CD14-positive monocyte (primary cell): ENCODE measurements at regions of chr6 and their contacts with region 1.

Region 1: DNA sequence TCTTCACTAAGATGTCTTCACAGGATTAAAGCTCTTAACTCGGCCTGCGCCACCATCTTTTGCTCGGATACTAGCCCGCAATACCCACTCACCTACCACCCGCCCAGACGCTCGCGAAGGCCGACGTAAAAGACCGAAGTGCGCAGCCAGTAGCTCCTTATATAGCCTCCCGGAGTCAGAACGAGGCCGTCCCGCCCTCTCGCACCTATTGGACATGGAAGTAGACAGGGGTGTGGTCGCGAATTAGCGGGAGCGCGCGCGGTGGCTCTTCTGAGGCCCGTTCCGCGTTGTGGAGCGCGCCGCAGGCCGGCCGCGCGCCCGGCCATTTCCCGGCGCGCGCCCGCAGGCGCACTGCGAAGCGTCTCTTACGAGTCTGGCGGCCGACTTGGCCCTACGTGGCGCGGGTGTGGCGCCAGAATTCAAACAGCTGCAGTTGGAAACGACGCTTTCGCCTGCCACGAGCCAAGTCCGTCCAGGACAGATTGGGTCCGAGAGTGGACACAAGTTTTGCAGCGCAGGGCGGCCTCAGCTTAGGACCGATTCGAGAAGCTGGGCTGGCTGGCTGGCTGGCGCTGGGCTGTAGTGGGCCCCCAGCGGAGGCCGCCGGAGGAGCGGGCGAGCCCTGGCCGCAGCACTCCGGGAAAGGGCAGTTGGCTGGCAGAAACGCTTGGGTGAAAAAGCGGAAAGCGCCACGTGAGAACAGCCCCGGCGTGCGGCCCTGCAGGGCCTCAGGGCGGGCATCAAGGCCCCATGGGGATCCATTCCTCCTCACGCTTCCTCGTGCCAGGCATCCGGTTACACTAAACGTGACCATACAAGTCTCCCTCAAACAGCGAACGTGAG is 36.1 kb upstream of the SYNCRIP start:
- DNase-seq: peak; percentile 99 to 100 (median 99)
- H3K4me3 ChIP-seq: peak overlapping the region; percentile 92 to 97 (median 92)
- H3K4me3 Mint-ChIP-seq: peak overlapping the region; percentile 96 to 99
- H3K27ac ChIP-seq: peak overlapping the region; percentile 83 to 89
- H3K27ac Mint-ChIP-seq: peak overlapping the region; percentile 94 to 97 (median 96)
- H3K4me1 ChIP-seq: peaks cover 40 to 49% of the 10 kb centered on the region in 2 donors
- H3K4me1 Mint-ChIP-seq: peaks cover 47% of the 10 kb centered on the region
- H3K27me3 ChIP-seq: no peaks in the 10 kb centered on the region
- H3K27me3 Mint-ChIP-seq: no peaks in the 10 kb centered on the region
- CTCF ChIP-seq: no peak

Region 2: DNA sequence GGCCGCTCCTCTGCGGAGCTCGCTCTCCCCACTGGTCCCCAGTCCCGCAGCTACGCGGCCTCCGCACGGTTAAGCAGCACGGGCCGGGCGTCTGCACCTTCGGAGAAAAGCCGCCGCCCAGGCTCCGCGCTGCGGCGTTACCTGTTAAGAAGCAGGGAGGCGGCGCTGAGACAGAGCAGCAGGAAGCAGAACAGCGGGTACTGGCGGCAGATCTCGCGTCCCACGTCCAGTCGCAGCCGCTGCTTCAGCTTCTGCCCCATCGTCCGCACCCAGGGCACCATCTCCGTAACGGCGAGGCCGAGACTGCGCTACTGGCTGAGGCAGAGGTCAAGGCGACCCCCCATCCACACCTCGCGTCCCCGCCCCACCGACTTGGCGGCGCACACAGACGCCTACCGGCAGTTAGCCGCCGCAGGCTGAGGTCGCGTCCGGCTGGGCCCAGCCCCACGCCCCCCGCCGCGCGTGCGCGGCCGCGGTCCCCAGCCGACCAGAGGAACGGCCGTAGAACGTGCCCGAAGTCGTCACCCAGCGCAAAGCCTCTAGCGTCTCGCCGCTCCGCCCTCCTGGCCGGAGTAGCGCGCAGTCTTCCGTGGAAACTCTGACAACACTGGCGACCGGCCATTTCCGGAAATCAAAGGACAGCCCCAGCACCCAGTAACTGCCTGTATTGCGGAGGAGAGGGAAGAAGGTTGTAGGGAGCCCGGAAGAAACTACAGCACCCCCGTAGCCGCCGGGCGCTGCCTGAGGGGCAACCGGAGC is 85.2 kb before region 1 on chr6 and contains the start of gene SNX14:
- intact Hi-C with region 1: loop called (anchors 1 to 5 kb)
- DNase-seq: peak; percentile 96 to 97 (median 96)
- H3K4me3 ChIP-seq: peak within 1 kb of the TSS; percentile 61 to 97 (median 86)
- H3K4me3 Mint-ChIP-seq: peak within 1 kb of the TSS; percentile 96 to 98
- H3K27ac ChIP-seq: peak within 1 kb of the TSS; percentile 95 to 97
- H3K27ac Mint-ChIP-seq: peak within 1 kb of the TSS; percentile 92 to 99 (median 97)
- H3K4me1 ChIP-seq: peaks cover 18 to 33% of the 10 kb centered on the region in 2 donors
- H3K4me1 Mint-ChIP-seq: peaks cover 26% of the 10 kb centered on the region
- H3K27me3 ChIP-seq: no peaks in the 10 kb centered on the region
- H3K27me3 Mint-ChIP-seq: peaks cover 0 to 2% (median 0%) of the 10 kb centered on the region in 3 donors
- CTCF ChIP-seq: no peak
- polyA plus RNA-seq, gene SNX14: 40.2 to 75.6 (median 73.3) TPM

Region 3: GRCh38 chr6:85620308-85620707 is 58.5 kb before region 1 on chr6:
- intact Hi-C with region 1: loop called in 1 of 2 experiments (anchors 10 kb)
- DNase-seq: peak in 1 of 3 donors; percentile 6
- H3K4me3 ChIP-seq: no peak overlapping the region
- H3K4me3 Mint-ChIP-seq: no peak overlapping the region
- H3K27ac ChIP-seq: peak overlapping the region in 1 of 2 donors; percentile 32
- H3K27ac Mint-ChIP-seq: peak overlapping the region in 2 of 7 donors; percentile 50 to 71
- H3K4me1 ChIP-seq: no peaks in the 10 kb centered on the region
- H3K4me1 Mint-ChIP-seq: peaks cover 4% of the 10 kb centered on the region
- H3K27me3 ChIP-seq: no peaks in the 10 kb centered on the region
- H3K27me3 Mint-ChIP-seq: no peaks in the 10 kb centered on the region
- CTCF ChIP-seq: no peak

Region 4: GRCh38 chr6:85642774-85643536 is 35.9 kb before region 1 on chr6 and contains the start of gene SYNCRIP:
- intact Hi-C with region 1: loop called (anchors 1 kb)
- DNase-seq: peak; percentile 95 to 98 (median 96)
- H3K4me3 ChIP-seq: peak within 1 kb of the TSS; percentile 87 to 98 (median 91)
- H3K4me3 Mint-ChIP-seq: peak within 1 kb of the TSS; percentile 91 to 97
- H3K27ac ChIP-seq: peak within 1 kb of the TSS; percentile 99 to 100
- H3K27ac Mint-ChIP-seq: peak within 1 kb of the TSS; percentile 97 to 100 (median 99)
- H3K4me1 ChIP-seq: peaks cover 29 to 34% of the 10 kb centered on the region in 2 donors
- H3K4me1 Mint-ChIP-seq: peaks cover 45% of the 10 kb centered on the region
- H3K27me3 ChIP-seq: no peaks in the 10 kb centered on the region
- H3K27me3 Mint-ChIP-seq: no peaks in the 10 kb centered on the region
- CTCF ChIP-seq: no peak
- polyA plus RNA-seq, gene SYNCRIP: 11.1 to 41.4 (median 36.6) TPM

Region 5: DNA sequence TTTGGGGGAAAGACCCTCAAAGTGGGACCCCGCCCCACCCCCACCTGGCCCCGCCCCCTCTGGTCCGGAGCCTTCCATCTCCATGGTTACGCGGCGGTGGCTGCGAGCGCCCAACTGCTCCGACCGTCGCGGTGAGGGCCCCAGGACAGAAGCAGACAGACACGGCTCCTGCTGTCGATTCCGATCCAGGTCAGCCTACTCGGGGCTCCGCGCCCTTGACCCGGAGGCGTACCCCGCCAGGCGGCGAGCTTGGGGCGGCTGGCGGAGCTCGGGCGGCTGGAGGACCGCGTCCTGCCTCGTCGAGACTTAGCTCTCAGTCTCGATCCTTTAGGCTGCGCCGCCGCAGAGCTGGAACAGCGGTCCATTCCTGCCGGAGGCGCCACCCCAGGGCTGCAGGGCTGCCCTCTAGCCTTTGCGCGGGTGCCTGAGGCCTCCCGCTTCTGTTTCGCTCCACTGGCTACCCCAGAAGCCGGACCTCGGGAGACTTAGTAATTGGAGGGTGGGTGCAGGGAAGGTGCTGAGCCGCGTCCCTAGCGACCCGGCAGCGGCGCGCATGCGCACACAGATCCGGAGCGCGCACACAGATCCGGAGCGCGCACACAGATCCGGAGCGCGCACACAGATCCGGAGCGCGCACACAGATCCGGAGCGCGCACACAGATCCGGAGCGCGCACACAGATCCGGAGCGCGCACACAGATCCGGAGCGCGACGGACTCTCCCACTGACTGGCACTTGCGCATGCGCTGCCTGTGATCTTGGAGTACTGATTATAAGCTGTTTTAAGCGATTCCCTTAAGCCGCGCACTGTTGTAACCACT is 1729.3 kb after region 1 on chr6 and contains the start of gene CFAP206:
- intact Hi-C with region 1: loop called in 1 of 2 experiments (anchors 5 kb)
- DNase-seq: peak; percentile 69 to 75 (median 69)
- H3K4me3 ChIP-seq: peak within 1 kb of the TSS; percentile 88 to 91 (median 89)
- H3K4me3 Mint-ChIP-seq: peak within 1 kb of the TSS; percentile 85 to 91
- H3K27ac ChIP-seq: peak within 1 kb of the TSS; percentile 49 to 64
- H3K27ac Mint-ChIP-seq: peak within 1 kb of the TSS; percentile 40 to 83 (median 72)
- H3K4me1 ChIP-seq: peaks cover 12 to 17% of the 10 kb centered on the region in 2 donors
- H3K4me1 Mint-ChIP-seq: peaks cover 18% of the 10 kb centered on the region
- H3K27me3 ChIP-seq: peaks cover 0 to 2% of the 10 kb centered on the region in 2 donors
- H3K27me3 Mint-ChIP-seq: peaks cover 4 to 13% (median 9%) of the 10 kb centered on the region in 3 donors
- CTCF ChIP-seq: no peak
- polyA plus RNA-seq, gene CFAP206: not detected